AG04449 (cell line): ENCODE measurements at regions of chr10 and their contacts with region 1.

Region 1: GRCh38 chr10:101834341-101834740 is 9.3 kb downstream of the KCNIP2 start:
- DNase-seq: no peak
- H3K4me3 ChIP-seq: no peak overlapping the region
- CTCF ChIP-seq: no peak

Region 2: DNA sequence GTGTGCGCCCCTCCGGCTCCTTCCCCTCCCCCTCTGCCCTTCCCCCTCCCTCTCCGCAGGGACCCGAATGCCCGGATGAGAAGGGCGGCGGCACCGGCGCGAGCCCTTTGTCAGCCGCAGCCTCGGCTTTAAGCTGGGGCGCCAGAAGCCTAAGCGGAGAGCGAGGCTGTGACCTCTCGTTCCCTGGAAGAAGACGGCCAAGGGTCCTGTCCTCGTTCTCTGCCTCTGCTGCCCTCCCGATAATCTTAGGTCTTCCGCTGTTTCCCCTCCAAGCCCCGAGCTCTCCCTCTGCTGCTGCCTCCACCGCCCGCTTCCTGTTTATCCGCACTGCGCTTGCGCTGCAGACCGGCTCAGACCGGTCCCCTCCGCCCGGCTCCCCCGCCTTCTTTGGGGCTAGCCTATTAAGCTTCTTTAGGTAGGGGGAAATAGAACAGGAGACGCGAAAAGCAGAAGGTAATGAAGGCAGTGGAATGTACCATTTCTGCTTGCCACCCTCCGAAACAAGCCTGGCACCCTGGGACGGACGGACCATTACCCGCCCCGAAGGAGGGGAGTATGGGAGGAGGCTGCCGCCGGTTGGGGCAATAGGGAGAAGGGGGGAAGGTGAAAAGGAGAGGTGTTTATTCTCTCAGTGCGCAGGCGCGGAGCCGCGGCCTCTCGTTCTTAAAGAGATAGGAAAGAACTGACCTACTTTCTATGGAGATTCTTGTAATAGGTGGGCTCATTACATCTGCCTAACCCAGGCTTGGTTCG is 16.0 kb before region 1 on chr10 and contains the start of gene OGA:
- CTCF ChIA-PET with region 1: interaction called, 15 read pairs
- POLR2A ChIA-PET with region 1: interaction called, 7 read pairs
- DNase-seq: peak; percentile 100
- H3K4me3 ChIP-seq: peak within 1 kb of the TSS; percentile 99
- CTCF ChIP-seq: no peak

Region 3: DNA sequence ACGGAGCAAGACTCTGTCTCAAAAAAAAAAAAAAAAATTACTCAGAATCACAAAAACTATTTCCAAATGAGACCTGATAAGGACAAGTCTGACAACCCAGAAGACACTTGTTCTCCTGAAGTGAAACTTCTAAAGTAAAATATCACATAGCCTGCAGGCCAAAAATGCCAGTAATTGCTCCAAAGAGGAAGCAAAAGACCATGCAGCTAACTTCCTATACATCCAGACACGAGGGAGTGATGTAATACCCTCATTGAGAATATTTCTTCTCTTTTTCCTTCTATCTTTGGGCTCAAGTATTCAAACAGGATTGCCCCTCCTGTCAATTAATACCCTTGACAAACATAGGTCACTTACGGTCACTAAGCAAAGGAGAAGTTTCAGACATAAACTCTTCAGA is 190.5 kb after region 1 on chr10:
- CTCF ChIA-PET with region 1: interaction called, 18 read pairs
- POLR2A ChIA-PET with region 1: no interaction called
- DNase-seq: no peak
- H3K4me3 ChIP-seq: no peak overlapping the region
- CTCF ChIP-seq: no peak